ENCODE measurements at regions of chr5 and their contacts with region 1.

Region 1: GRCh38 chr5:127313847-127314473 is 23.4 kb downstream of the MEGF10 start:
- DNase-seq: peak; percentile 72
- H3K4me3 ChIP-seq: no peak overlapping the region
- H3K27ac ChIP-seq: no peak overlapping the region
- H3K4me1 ChIP-seq: peaks cover 0 to 23% (median 4%) of the 10 kb centered on the region in 4 donors
- H3K27me3 ChIP-seq: no peaks in the 10 kb centered on the region
- CTCF ChIP-seq: peak; percentile 66 to 76 (median 66)
- EP300 ChIP-seq: no peak
- POLR2A ChIP-seq: no peak

Region 2: GRCh38 chr5:126422989-126423788 is 890.8 kb before region 1 on chr5 and contains the start of gene GRAMD2B:
- in situ Hi-C with region 1: no loop called
- intact Hi-C with region 1: no loop called
- DNase-seq: peak; percentile 86
- H3K4me3 ChIP-seq: peak within 1 kb of the TSS; percentile 9 to 58 (median 52)
- H3K27ac ChIP-seq: peak within 1 kb of the TSS; percentile 84 to 93 (median 89)
- H3K4me1 ChIP-seq: peaks cover 7 to 31% (median 11%) of the 10 kb centered on the region in 4 donors
- H3K27me3 ChIP-seq: no peaks in the 10 kb centered on the region
- CTCF ChIP-seq: no peak
- EP300 ChIP-seq: no peak
- POLR2A ChIP-seq: peak; percentile 75
- total RNA-seq, gene GRAMD2B: 93.9 to 191 (median 161) TPM

Region 3: DNA sequence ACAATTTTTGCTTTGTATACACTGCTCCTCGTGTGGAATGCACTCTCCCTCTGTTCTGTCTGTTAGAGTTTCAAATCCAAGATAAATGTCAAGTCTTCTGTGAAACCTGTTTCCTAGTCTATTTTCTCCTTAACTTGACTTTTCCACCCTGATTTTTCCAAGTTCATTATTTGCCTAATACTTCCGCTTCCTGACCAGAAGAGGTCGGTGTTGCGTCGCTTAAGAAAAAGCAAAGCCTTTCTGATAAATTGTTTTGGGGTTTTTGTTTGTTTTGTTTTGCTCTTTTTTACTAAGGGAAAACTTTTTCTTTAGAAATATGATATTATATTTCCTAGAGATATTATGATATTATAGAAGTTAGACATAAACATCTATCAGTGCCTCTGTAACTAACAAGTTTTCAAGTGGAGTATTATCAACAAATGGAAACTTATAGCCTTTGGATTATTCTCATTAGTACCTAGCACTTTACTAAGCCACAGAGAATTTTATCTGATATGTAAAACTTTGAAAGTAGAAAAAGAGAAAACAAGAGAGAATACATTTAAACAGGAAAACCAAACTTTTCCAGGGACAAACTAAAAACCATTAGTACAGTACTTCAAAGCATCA is 657.5 kb before region 1 on chr5:
- in situ Hi-C with region 1: loop called in 3 of 4 experiments (anchors 10 to 25 kb)
- intact Hi-C with region 1: no loop called
- DNase-seq: no peak
- H3K4me3 ChIP-seq: no peak overlapping the region
- H3K27ac ChIP-seq: no peak overlapping the region
- H3K4me1 ChIP-seq: peaks cover 0 to 15% (median 5%) of the 10 kb centered on the region in 4 donors
- H3K27me3 ChIP-seq: no peaks in the 10 kb centered on the region
- CTCF ChIP-seq: peak; percentile 71 to 81 (median 79)
- EP300 ChIP-seq: no peak
- POLR2A ChIP-seq: no peak

Region 4: DNA sequence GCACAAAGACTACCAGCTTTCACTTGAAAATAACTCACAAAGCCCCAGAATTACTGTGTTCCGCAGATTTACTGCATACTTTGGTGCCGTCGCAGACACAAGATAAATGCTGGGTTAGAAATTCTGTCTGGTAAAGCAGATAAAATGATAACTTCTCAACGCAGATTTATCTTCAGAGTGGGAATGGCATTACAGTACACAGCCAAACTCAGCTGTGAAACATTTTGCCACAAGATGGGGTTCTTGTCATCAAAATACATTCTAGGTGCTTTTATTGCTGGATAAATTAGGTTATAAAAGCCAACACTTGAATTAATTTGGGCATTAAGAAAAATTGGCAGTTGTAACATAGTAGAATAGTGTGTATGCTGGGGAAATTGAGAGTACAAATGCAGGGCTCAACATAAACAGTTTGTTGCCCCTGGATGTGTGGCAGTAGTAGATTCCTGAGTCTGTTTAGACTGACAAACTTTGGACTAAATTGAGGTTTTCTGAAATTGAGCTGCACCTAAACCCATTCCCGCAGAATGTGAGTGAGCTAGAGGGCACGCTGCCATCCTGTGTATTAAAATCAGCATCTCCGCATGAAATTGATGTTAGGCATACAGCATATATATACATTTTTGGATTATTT is 475.9 kb before region 1 on chr5:
- in situ Hi-C with region 1: loop called in 1 of 4 experiments (anchors 25 kb)
- intact Hi-C with region 1: no loop called
- DNase-seq: no peak
- H3K4me3 ChIP-seq: no peak overlapping the region
- H3K27ac ChIP-seq: no peak overlapping the region
- H3K4me1 ChIP-seq: no peaks in the 10 kb centered on the region
- H3K27me3 ChIP-seq: no peaks in the 10 kb centered on the region
- CTCF ChIP-seq: peak; percentile 31 to 40 (median 38)
- EP300 ChIP-seq: no peak
- POLR2A ChIP-seq: no peak

Region 5: GRCh38 chr5:127176769-127177168 is 137.2 kb before region 1 on chr5:
- in situ Hi-C with region 1: no loop called
- intact Hi-C with region 1: no loop called
- DNase-seq: no peak
- H3K4me3 ChIP-seq: no peak overlapping the region
- H3K27ac ChIP-seq: no peak overlapping the region
- H3K4me1 ChIP-seq: no peaks in the 10 kb centered on the region
- H3K27me3 ChIP-seq: no peaks in the 10 kb centered on the region
- CTCF ChIP-seq: no peak
- EP300 ChIP-seq: no peak
- POLR2A ChIP-seq: no peak

Region 6: DNA sequence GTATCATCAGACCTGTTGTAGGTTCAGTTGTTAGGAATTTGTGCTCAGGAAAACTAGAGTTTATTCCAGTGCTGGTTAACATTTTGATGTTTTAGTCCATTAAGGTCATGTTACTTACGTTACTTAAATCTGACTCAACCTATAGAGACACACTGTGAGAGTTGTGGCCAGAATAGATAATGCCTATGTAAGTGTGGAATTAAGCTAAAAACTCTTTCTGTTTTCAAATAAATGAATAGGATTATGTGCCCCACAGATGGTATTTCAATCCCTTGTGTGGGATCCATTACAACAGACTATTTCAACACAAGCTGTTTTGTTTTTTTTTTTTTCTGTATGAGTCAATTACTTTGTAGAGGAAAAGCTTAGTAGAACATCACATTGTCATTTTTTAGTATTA is 44.8 kb after region 1 on chr5:
- in situ Hi-C with region 1: no loop called
- intact Hi-C with region 1: no loop called
- DNase-seq: no peak
- H3K4me3 ChIP-seq: no peak overlapping the region
- H3K27ac ChIP-seq: no peak overlapping the region
- H3K4me1 ChIP-seq: peaks cover 0 to 18% (median 0%) of the 10 kb centered on the region in 4 donors
- H3K27me3 ChIP-seq: no peaks in the 10 kb centered on the region
- CTCF ChIP-seq: no peak
- EP300 ChIP-seq: no peak
- POLR2A ChIP-seq: no peak

Region 7: GRCh38 chr5:127492854-127493738 is 179.1 kb after region 1 on chr5:
- in situ Hi-C with region 1: loop called in 2 of 4 experiments (anchors 10 to 25 kb)
- intact Hi-C with region 1: no loop called
- DNase-seq: no peak
- H3K4me3 ChIP-seq: peak overlapping the region in 1 of 4 donors; percentile 10
- H3K27ac ChIP-seq: peak overlapping the region; percentile 69 to 77 (median 74)
- H3K4me1 ChIP-seq: peaks cover 0 to 27% (median 7%) of the 10 kb centered on the region in 4 donors
- H3K27me3 ChIP-seq: peaks cover 8% of the 10 kb centered on the region
- CTCF ChIP-seq: peak; percentile 62 to 93 (median 71)
- EP300 ChIP-seq: no peak
- POLR2A ChIP-seq: no peak